CD4-positive, alpha-beta T cell (primary cell): ENCODE measurements at regions of chr5 and their contacts with region 1.

Region 1: DNA sequence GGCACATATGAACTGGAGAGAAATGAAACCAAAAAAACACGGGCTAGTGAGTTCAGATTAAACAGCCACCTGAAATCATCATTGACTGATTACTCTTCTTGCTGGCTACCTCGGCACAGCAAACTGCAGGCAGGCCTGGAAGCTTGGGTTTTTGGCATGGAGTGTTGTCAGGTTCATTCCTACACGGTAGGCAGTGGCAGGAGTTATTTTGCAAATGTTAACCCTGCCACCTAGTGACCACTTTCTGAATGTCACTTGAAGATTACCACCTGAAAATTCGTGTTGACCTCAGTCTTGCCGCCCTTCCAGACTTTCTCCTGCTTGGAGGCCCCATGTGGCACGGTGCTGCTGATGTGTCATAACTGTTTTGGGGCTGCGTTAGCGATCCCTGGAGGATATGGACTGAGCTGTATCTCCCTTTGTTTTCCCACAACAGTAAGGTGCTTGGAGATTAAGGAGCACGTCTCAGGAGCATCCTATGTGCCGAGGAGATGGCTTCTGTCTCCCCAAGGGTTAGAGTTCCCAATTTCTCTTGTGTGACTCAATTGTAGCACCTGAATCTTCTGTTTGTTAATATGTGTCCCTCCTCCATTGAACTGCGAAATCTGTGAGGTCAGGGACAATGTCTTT is 12.7 kb upstream of the CD180 start:
- DNase-seq: peak; percentile 23 to 87 (median 50)
- ATAC-seq: peak; percentile 41
- H3K4me3 ChIP-seq: no peak overlapping the region
- H3K4me3 Mint-ChIP-seq: peak overlapping the region; percentile 35
- H3K27ac ChIP-seq: no peak overlapping the region
- H3K27ac Mint-ChIP-seq: peak overlapping the region; percentile 78
- H3K4me1 ChIP-seq: peaks cover 52% of the 10 kb centered on the region
- H3K4me1 Mint-ChIP-seq: peaks cover 61% of the 10 kb centered on the region
- H3K27me3 ChIP-seq: no peaks in the 10 kb centered on the region
- H3K27me3 Mint-ChIP-seq: no peaks in the 10 kb centered on the region
- CTCF ChIP-seq: peak; percentile 74

Region 2: GRCh38 chr5:66814146-66814991 is 394.9 kb before region 1 on chr5:
- CTCF ChIA-PET with region 1: no interaction called
- POLR2A ChIA-PET with region 1: no interaction called
- intact Hi-C with region 1: loop called (anchors 1 kb)
- DNase-seq: peak in 10 of 14 experiments; percentile 15 to 72 (median 28)
- ATAC-seq: peak; percentile 68
- H3K4me3 ChIP-seq: no peak overlapping the region
- H3K4me3 Mint-ChIP-seq: no peak overlapping the region
- H3K27ac ChIP-seq: no peak overlapping the region
- H3K27ac Mint-ChIP-seq: no peak overlapping the region
- H3K4me1 ChIP-seq: peaks cover 3% of the 10 kb centered on the region
- H3K4me1 Mint-ChIP-seq: no peaks in the 10 kb centered on the region
- H3K27me3 ChIP-seq: no peaks in the 10 kb centered on the region
- H3K27me3 Mint-ChIP-seq: no peaks in the 10 kb centered on the region
- CTCF ChIP-seq: peak; percentile 72

Region 3: GRCh38 chr5:66987949-66988838 is 221.1 kb before region 1 on chr5:
- CTCF ChIA-PET with region 1: no interaction called
- POLR2A ChIA-PET with region 1: interaction called, 3 read pairs
- intact Hi-C with region 1: loop called (anchors 1 to 2 kb)
- DNase-seq: peak in 3 of 14 experiments; percentile 45 to 53 (median 50)
- ATAC-seq: peak; percentile 73
- H3K4me3 ChIP-seq: no peak overlapping the region
- H3K4me3 Mint-ChIP-seq: no peak overlapping the region
- H3K27ac ChIP-seq: no peak overlapping the region
- H3K27ac Mint-ChIP-seq: no peak overlapping the region
- H3K4me1 ChIP-seq: no peaks in the 10 kb centered on the region
- H3K4me1 Mint-ChIP-seq: peaks cover 5% of the 10 kb centered on the region
- H3K27me3 ChIP-seq: no peaks in the 10 kb centered on the region
- H3K27me3 Mint-ChIP-seq: no peaks in the 10 kb centered on the region
- CTCF ChIP-seq: peak; percentile 94

Region 4: GRCh38 chr5:67102708-67103107 is 106.5 kb before region 1 on chr5:
- CTCF ChIA-PET with region 1: no interaction called
- POLR2A ChIA-PET with region 1: no interaction called
- intact Hi-C with region 1: no loop called
- DNase-seq: no peak
- ATAC-seq: no peak
- H3K4me3 ChIP-seq: no peak overlapping the region
- H3K4me3 Mint-ChIP-seq: no peak overlapping the region
- H3K27ac ChIP-seq: no peak overlapping the region
- H3K27ac Mint-ChIP-seq: no peak overlapping the region
- H3K4me1 ChIP-seq: no peaks in the 10 kb centered on the region
- H3K4me1 Mint-ChIP-seq: no peaks in the 10 kb centered on the region
- H3K27me3 ChIP-seq: no peaks in the 10 kb centered on the region
- H3K27me3 Mint-ChIP-seq: no peaks in the 10 kb centered on the region
- CTCF ChIP-seq: no peak

Region 5: DNA sequence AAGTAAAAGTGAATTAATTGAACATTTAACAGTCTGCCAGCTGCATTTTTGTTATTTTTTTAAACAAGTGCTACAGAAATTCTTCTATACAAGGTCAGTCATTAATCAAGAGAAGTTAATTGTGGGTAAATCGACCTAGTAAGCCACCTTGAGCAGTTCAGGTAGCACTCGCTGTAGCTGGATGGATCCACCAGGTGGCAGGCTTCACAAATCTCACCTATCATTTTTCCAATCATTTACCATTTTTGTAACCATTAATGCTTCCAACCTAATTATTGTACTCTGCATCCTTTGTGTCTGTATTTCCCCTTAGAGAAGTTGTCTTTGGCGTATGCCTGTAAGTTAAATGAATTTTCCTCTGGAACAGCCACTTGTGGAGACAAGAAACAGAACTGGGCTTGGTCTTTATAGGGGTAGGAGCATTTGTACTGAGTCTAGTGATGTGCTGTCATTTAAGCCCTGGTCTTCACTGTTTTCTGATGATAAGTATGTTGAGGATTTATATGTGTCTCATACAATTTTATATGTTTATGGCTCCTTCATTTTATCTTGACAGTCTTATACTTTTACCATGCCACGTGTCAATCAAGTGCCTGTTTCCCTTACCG is 52.2 kb before region 1 on chr5:
- CTCF ChIA-PET with region 1: interaction called, 20 read pairs
- POLR2A ChIA-PET with region 1: interaction called, 275 read pairs
- intact Hi-C with region 1: loop called (anchors 1 kb)
- DNase-seq: peak; percentile 42 to 81 (median 50)
- ATAC-seq: peak; percentile 55
- H3K4me3 ChIP-seq: no peak overlapping the region
- H3K4me3 Mint-ChIP-seq: peak overlapping the region; percentile 17
- H3K27ac ChIP-seq: no peak overlapping the region
- H3K27ac Mint-ChIP-seq: peak overlapping the region; percentile 71
- H3K4me1 ChIP-seq: peaks cover 45% of the 10 kb centered on the region
- H3K4me1 Mint-ChIP-seq: peaks cover 59% of the 10 kb centered on the region
- H3K27me3 ChIP-seq: no peaks in the 10 kb centered on the region
- H3K27me3 Mint-ChIP-seq: no peaks in the 10 kb centered on the region
- CTCF ChIP-seq: peak; percentile 96

Region 6: GRCh38 chr5:67165526-67166459 is 43.5 kb before region 1 on chr5:
- CTCF ChIA-PET with region 1: interaction called, 74 read pairs
- POLR2A ChIA-PET with region 1: interaction called, 275 read pairs
- intact Hi-C with region 1: loop called (anchors 1 kb)
- DNase-seq: peak; percentile 65 to 91 (median 80)
- ATAC-seq: peak; percentile 69
- H3K4me3 ChIP-seq: peak overlapping the region; percentile 56
- H3K4me3 Mint-ChIP-seq: peak overlapping the region; percentile 88
- H3K27ac ChIP-seq: peak overlapping the region; percentile 83 to 88
- H3K27ac Mint-ChIP-seq: peak overlapping the region; percentile 97
- H3K4me1 ChIP-seq: peaks cover 73% of the 10 kb centered on the region
- H3K4me1 Mint-ChIP-seq: peaks cover 71% of the 10 kb centered on the region
- H3K27me3 ChIP-seq: no peaks in the 10 kb centered on the region
- H3K27me3 Mint-ChIP-seq: no peaks in the 10 kb centered on the region
- CTCF ChIP-seq: peak; percentile 73

Region 7: DNA sequence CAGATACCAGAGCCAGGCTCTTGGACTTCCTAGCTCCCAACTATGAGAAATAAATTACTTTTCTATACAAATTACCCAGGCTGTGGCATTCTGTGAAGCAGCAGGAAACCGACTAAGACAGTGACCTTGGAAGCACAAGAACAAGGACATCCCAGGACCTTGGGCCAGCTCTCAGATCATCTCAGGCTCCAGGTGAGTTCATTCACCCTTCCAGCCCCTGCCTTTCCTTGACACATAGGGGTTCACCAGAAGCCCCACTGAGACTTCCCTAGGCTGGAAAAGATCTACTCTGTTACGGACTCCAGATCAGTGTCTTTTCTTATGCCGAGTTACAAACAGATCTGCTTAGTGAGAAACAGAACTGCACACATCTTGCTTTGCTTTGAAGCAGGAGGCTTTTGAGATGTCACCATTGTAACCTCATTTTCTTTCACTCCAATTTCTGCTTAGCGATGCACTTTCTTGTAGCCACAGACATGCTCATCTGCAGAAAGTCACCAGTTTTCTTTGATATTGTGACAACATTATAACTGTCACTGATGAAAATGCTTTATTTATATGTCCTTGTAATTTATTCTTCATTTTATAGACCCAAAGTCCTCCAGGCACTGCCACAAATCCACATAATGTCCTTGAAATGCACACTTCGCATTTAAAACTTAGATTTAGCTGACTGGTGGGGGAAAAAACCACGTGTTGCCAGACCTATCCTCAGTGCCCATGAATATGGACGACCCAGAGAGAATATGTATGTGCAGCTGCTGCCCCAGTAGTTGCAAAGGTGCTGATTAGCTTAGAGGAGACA is 20.8 kb before region 1 on chr5:
- CTCF ChIA-PET with region 1: interaction called, 3 read pairs
- POLR2A ChIA-PET with region 1: interaction called, 12 read pairs
- intact Hi-C with region 1: loop called in 1 of 2 experiments (anchors 2 kb)
- DNase-seq: peak in 1 of 14 experiments; percentile 25
- ATAC-seq: peak; percentile 61
- H3K4me3 ChIP-seq: no peak overlapping the region
- H3K4me3 Mint-ChIP-seq: peak overlapping the region; percentile 22
- H3K27ac ChIP-seq: peak overlapping the region in 1 of 2 donors; percentile 77
- H3K27ac Mint-ChIP-seq: peak overlapping the region; percentile 85
- H3K4me1 ChIP-seq: peaks cover 26% of the 10 kb centered on the region
- H3K4me1 Mint-ChIP-seq: peaks cover 54% of the 10 kb centered on the region
- H3K27me3 ChIP-seq: no peaks in the 10 kb centered on the region
- H3K27me3 Mint-ChIP-seq: no peaks in the 10 kb centered on the region
- CTCF ChIP-seq: no peak

Region 8: GRCh38 chr5:67221487-67222242 is 12.4 kb after region 1 on chr5:
- CTCF ChIA-PET with region 1: interaction called, 12 read pairs
- POLR2A ChIA-PET with region 1: interaction called, 9 read pairs
- intact Hi-C with region 1: no loop called
- DNase-seq: peak in 11 of 14 experiments; percentile 16 to 83 (median 39)
- ATAC-seq: peak; percentile 83
- H3K4me3 ChIP-seq: peak overlapping the region; percentile 7
- H3K4me3 Mint-ChIP-seq: peak overlapping the region; percentile 81
- H3K27ac ChIP-seq: peak overlapping the region; percentile 30 to 33
- H3K27ac Mint-ChIP-seq: peak overlapping the region; percentile 93
- H3K4me1 ChIP-seq: peaks cover 68% of the 10 kb centered on the region
- H3K4me1 Mint-ChIP-seq: peaks cover 68% of the 10 kb centered on the region
- H3K27me3 ChIP-seq: no peaks in the 10 kb centered on the region
- H3K27me3 Mint-ChIP-seq: no peaks in the 10 kb centered on the region
- CTCF ChIP-seq: no peak